PC-9 (cell line): ENCODE measurements at regions of chr17 and their contacts with region 1.

Region 1: DNA sequence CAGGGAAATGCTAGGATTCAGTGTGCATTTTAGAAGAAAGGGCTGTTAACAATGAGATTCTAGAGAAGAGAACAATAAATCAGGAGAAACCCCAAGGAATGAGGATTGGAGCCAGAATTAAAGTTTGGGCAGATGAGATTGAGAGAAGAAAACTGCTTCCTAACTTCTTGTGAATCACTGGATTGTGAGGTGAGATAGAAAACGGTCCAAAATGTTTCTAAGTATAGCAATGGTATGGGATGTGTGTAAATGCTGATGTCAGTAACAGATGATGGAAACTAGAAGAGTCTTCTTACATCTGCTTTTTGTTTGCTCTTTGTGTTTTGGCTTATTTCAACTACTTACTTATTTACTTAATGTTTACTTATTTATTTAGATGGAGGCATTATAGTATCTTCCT is 123.0 kb downstream of the KCNJ2 start:
- DNase-seq: no peak
- H3K4me3 ChIP-seq: no peak overlapping the region
- H3K27ac ChIP-seq: no peak overlapping the region
- H3K4me1 ChIP-seq: no peaks in the 10 kb centered on the region; the same call in 1 of the 2 replicates
- H3K27me3 ChIP-seq: no peaks in the 10 kb centered on the region
- CTCF ChIP-seq: no peak

Region 2: GRCh38 chr17:70353408-70354092 is 61.2 kb after region 1 on chr17:
- CTCF ChIA-PET with region 1: no interaction called
- POLR2A ChIA-PET with region 1: no interaction called
- intact Hi-C with region 1: loop called (anchors 2 kb)
- DNase-seq: no peak
- H3K4me3 ChIP-seq: no peak overlapping the region
- H3K27ac ChIP-seq: no peak overlapping the region
- H3K4me1 ChIP-seq: no peaks in the 10 kb centered on the region
- H3K27me3 ChIP-seq: peaks cover 4% of the 10 kb centered on the region; the same call in 1 of the 2 replicates
- CTCF ChIP-seq: no peak

Region 3: GRCh38 chr17:70608172-70608571 is 315.8 kb after region 1 on chr17:
- CTCF ChIA-PET with region 1: no interaction called
- POLR2A ChIA-PET with region 1: no interaction called
- intact Hi-C with region 1: no loop called
- DNase-seq: peak in 1 of 2 experiments; percentile 46
- H3K4me3 ChIP-seq: no peak overlapping the region
- H3K27ac ChIP-seq: no peak overlapping the region
- H3K4me1 ChIP-seq: peaks cover 10% of the 10 kb centered on the region
- H3K27me3 ChIP-seq: no peaks in the 10 kb centered on the region
- CTCF ChIP-seq: no peak